GM12878 (cell line): ENCODE measurements at regions of chr3 and their contacts with region 1.

Region 1: DNA sequence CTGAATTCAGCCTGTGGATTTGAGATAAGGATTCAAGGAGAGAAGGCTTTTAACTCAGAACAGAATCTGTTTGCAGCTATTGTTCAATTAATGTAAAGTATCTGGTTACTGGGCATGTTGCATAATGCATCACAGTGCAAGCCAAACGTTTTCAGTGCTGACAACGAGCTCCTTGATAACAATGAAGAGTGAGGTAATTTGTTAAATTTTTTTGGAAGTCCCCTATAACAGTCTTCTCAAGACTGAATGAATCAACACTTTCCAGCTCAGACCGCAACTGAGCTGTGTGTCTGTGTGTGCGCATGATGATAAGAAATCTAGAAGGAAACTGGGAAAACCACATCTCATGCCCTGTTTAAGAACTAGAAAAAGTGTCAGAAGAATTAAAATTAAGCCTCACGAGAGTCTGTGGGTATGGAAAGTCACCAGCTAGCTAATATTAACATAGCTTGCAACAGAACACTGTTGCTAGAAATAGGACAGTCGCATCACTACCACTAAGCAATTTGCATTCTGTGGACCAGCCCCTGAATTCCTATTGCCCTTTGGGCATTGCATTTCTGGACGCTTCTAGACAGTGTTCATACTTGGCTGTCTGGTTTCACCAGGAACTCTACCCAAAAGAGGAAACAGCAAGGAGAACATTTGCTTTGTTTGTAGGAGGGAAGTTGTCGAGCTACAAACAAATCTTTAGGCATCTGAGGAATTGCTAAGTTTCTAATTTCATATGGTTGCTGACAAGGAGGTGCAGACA is 43.7 kb upstream of the ATP2C1 start:
- DNase-seq: peak; percentile 95
- ATAC-seq: peak; percentile 77
- H3K4me3 ChIP-seq: peak overlapping the region; percentile 73
- H3K27ac ChIP-seq: peak overlapping the region; percentile 88
- H3K4me1 ChIP-seq: peaks cover 14% of the 10 kb centered on the region
- H3K27me3 ChIP-seq: no peaks in the 10 kb centered on the region
- CTCF ChIP-seq: no peak
- EP300 ChIP-seq: peak; percentile 96 to 99
- POLR2A ChIP-seq: peak; percentile 56; the same call in 1 of the 2 replicates
- RAD21 ChIP-seq: no peak

Region 2: GRCh38 chr3:130746246-130747039 is 103.8 kb before region 1 on chr3 and contains the start of gene PIK3R4:
- CTCF ChIA-PET with region 1: interaction called, 3 read pairs
- POLR2A ChIA-PET with region 1: interaction called, 3 read pairs
- RAD21 ChIA-PET with region 1: interaction called, 16 read pairs
- SMC1A ChIA-PET with region 1: no interaction called
- in situ Hi-C with region 1: no loop called
- intact Hi-C with region 1: no loop called
- DNase-seq: peak; percentile 95
- ATAC-seq: peak; percentile 87
- H3K4me3 ChIP-seq: peak within 1 kb of the TSS; percentile 85
- H3K27ac ChIP-seq: peak within 1 kb of the TSS; percentile 87
- H3K4me1 ChIP-seq: peaks cover 4% of the 10 kb centered on the region; the same call in 1 of the 2 replicates
- H3K27me3 ChIP-seq: no peaks in the 10 kb centered on the region
- CTCF ChIP-seq: no peak
- EP300 ChIP-seq: no peak
- POLR2A ChIP-seq: peak; percentile 80
- RAD21 ChIP-seq: no peak
- polyA plus RNA-seq, gene PIK3R4: 22.6 to 35.8 TPM

Region 3: DNA sequence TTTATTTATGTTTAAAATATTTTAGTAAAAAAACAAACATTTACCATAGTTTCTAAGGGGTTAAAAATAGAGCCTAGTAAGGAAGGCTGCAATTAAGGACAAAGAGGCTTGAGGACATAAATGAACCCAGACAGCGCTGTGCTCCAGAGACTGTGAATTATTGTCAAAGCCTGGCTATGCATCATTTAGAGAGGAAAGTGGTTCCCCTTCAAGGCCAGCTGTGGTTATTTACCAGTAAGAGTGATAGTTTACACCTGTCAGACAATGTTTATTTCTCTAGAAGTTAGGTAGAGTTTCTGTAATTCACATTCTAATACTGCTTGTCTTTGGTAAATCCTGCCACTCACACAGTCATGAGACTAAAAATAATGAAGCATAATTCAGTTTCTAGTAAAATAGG is 71.2 kb before region 1 on chr3:
- CTCF ChIA-PET with region 1: no interaction called
- POLR2A ChIA-PET with region 1: interaction called, 3 read pairs
- RAD21 ChIA-PET with region 1: interaction called, 4 read pairs
- SMC1A ChIA-PET with region 1: no interaction called
- in situ Hi-C with region 1: no loop called
- intact Hi-C with region 1: loop called (anchors 2 kb)
- DNase-seq: peak; percentile 59
- ATAC-seq: peak; percentile 98
- H3K4me3 ChIP-seq: no peak overlapping the region
- H3K27ac ChIP-seq: peak overlapping the region; percentile 32; the same call in 1 of the 2 replicates
- H3K4me1 ChIP-seq: peaks cover 21% of the 10 kb centered on the region
- H3K27me3 ChIP-seq: no peaks in the 10 kb centered on the region; a peak in 1 of 4 replicates
- CTCF ChIP-seq: no peak
- EP300 ChIP-seq: peak in 1 of 2 experiments; percentile 73; a peak in 1 of 4 replicates
- POLR2A ChIP-seq: no peak
- RAD21 ChIP-seq: no peak

Region 4: DNA sequence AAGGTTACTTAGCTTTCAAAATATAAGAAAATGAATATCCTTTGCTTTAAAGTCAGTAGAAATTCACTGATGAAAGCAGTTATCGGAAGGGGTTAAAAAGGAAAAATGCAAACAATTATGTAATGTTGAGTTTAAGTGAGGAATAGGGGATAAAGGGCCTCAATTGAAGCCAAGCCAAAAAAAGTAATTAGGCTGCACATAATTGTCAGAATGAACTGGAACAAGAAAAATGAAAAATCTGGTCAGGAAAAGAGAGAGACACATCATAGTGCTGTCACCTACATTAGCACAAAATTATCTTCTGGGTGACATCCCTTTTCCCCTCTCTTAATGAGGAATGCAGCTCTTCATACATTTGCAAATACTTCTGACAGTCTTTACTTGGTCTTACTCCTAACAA is 54.8 kb before region 1 on chr3:
- CTCF ChIA-PET with region 1: no interaction called
- POLR2A ChIA-PET with region 1: no interaction called
- RAD21 ChIA-PET with region 1: no interaction called
- SMC1A ChIA-PET with region 1: no interaction called
- in situ Hi-C with region 1: no loop called
- intact Hi-C with region 1: no loop called
- DNase-seq: no peak
- ATAC-seq: no peak
- H3K4me3 ChIP-seq: no peak overlapping the region
- H3K27ac ChIP-seq: no peak overlapping the region
- H3K4me1 ChIP-seq: no peaks in the 10 kb centered on the region
- H3K27me3 ChIP-seq: no peaks in the 10 kb centered on the region
- CTCF ChIP-seq: no peak
- EP300 ChIP-seq: no peak
- POLR2A ChIP-seq: no peak
- RAD21 ChIP-seq: no peak

Region 5: GRCh38 chr3:130839813-130840212 is 10.4 kb before region 1 on chr3:
- CTCF ChIA-PET with region 1: interaction called, 10 read pairs
- POLR2A ChIA-PET with region 1: interaction called, 22 read pairs
- RAD21 ChIA-PET with region 1: interaction called, 41 read pairs
- SMC1A ChIA-PET with region 1: interaction called, 71 read pairs
- in situ Hi-C with region 1: no loop called
- intact Hi-C with region 1: no loop called
- DNase-seq: no peak
- ATAC-seq: peak; percentile 72
- H3K4me3 ChIP-seq: no peak overlapping the region
- H3K27ac ChIP-seq: no peak overlapping the region
- H3K4me1 ChIP-seq: peaks cover 12% of the 10 kb centered on the region
- H3K27me3 ChIP-seq: no peaks in the 10 kb centered on the region
- CTCF ChIP-seq: no peak
- EP300 ChIP-seq: no peak
- POLR2A ChIP-seq: no peak
- RAD21 ChIP-seq: no peak